ENCODE measurements at regions of chr14 and their contacts with region 1.

Region 1: GRCh38 chr14:100108042-100108825 is 43.0 kb downstream of the EVL start:
- DNase-seq: peak; percentile 92
- H3K4me3 Mint-ChIP-seq: peak overlapping the region; percentile 4
- H3K27ac Mint-ChIP-seq: peak overlapping the region; percentile 90
- H3K4me1 Mint-ChIP-seq: peaks cover 62% of the 10 kb centered on the region
- H3K27me3 Mint-ChIP-seq: no peaks in the 10 kb centered on the region

Region 2: GRCh38 chr14:100056964-100057795 is 51.1 kb before region 1 on chr14:
- CTCF ChIA-PET with region 1: interaction called, 573 read pairs
- POLR2A ChIA-PET with region 1: interaction called, 9 read pairs
- intact Hi-C with region 1: loop called (anchors 1 kb)
- DNase-seq: no peak
- H3K4me3 Mint-ChIP-seq: no peak overlapping the region
- H3K27ac Mint-ChIP-seq: peak overlapping the region; percentile 56
- H3K4me1 Mint-ChIP-seq: peaks cover 49% of the 10 kb centered on the region
- H3K27me3 Mint-ChIP-seq: no peaks in the 10 kb centered on the region

Region 3: DNA sequence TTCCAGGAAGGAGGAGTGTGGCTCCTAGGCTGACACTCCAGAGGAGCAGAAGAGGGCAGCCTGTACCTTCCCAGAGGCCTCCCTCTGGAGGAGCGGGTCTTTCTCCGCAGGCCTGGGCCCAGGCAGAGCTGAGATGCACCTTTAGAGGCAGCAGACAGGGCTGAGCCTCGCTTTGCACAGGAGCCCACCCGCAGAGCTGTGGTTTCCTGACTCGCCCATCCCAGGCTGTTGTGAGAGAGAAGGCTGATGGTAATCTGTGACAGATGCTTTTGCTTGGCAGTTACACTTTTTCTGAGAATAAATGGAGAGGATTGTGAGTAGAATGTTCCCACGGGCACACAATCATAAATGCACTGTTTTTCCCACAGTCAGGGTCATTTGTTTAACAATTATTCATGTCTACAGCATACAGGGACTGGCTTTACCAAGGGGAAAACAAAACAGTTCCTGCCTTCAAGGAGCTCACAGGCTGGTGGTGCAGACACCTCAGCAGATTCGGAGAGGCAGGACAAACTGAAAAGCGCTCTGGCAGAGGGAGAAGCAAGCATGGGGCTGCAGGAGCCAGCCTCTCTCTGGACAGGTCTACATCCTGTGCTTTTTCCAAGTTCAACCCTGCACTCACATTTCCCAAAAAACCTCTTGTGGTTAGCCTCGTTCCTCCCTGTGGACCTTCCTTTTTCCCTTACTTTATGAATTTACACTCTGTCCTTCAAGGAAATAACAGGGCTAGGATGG is 29.1 kb before region 1 on chr14:
- CTCF ChIA-PET with region 1: interaction called, 573 read pairs
- POLR2A ChIA-PET with region 1: interaction called, 200 read pairs
- intact Hi-C with region 1: loop called (anchors 1 kb)
- DNase-seq: peak; percentile 88
- H3K4me3 Mint-ChIP-seq: peak overlapping the region; percentile 63
- H3K27ac Mint-ChIP-seq: peak overlapping the region; percentile 87
- H3K4me1 Mint-ChIP-seq: peaks cover 96% of the 10 kb centered on the region
- H3K27me3 Mint-ChIP-seq: no peaks in the 10 kb centered on the region

Region 4: DNA sequence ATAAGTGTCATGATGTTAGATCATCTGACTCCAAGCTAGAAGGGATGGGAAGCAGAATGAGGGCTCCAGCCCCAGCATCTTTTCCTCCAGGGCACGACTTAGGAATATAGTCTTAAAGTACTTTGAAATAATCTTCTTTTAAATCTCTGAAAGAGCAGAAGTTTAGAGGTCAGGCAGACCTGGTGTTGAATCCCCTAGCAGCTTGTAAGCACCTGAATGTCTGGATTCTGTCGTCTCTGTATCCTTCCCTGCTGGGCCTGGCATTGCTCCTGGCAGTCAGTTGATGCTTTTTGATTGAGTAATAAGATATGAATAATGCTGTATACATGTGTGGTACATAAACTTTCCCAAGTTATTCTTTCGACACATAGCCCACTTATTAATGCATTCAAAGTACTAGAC is 11.7 kb before region 1 on chr14:
- CTCF ChIA-PET with region 1: interaction called, 18 read pairs
- POLR2A ChIA-PET with region 1: interaction called, 9 read pairs
- intact Hi-C with region 1: loop called (anchors 1 kb)
- DNase-seq: peak; percentile 5
- H3K4me3 Mint-ChIP-seq: no peak overlapping the region
- H3K27ac Mint-ChIP-seq: peak overlapping the region; percentile 38
- H3K4me1 Mint-ChIP-seq: peaks cover 83% of the 10 kb centered on the region
- H3K27me3 Mint-ChIP-seq: no peaks in the 10 kb centered on the region

Region 5: GRCh38 chr14:100122481-100123222 is 14.4 kb after region 1 on chr14:
- CTCF ChIA-PET with region 1: interaction called, 35 read pairs
- POLR2A ChIA-PET with region 1: no interaction called
- intact Hi-C with region 1: no loop called
- DNase-seq: no peak
- H3K4me3 Mint-ChIP-seq: no peak overlapping the region
- H3K27ac Mint-ChIP-seq: no peak overlapping the region
- H3K4me1 Mint-ChIP-seq: peaks cover 15% of the 10 kb centered on the region
- H3K27me3 Mint-ChIP-seq: no peaks in the 10 kb centered on the region

Measured in activated CD4-positive, alpha-beta memory T cell treated with anti-CD3 and anti-CD28 coated beads for 36 hours (primary cell).